Esophagus muscularis mucosa (tissue), 4 donors: ENCODE measurements at regions of chr1 and their contacts with region 1.

Region 1: GRCh38 chr1:172322219-172323061 is 98.0 kb upstream of the C1orf105 start:
- DNase-seq: no peak
- H3K4me3 ChIP-seq: peak overlapping the region; percentile 6 to 39 (median 26)
- H3K27ac ChIP-seq: peak overlapping the region; percentile 78 to 84 (median 80)
- H3K4me1 ChIP-seq: peaks cover 13 to 46% (median 45%) of the 10 kb centered on the region in 4 donors
- H3K27me3 ChIP-seq: no peaks in the 10 kb centered on the region
- CTCF ChIP-seq: no peak
- EP300 ChIP-seq: no peak
- POLR2A ChIP-seq: no peak

Region 2: GRCh38 chr1:172357753-172358385 is 35.4 kb after region 1 on chr1:
- intact Hi-C with region 1: loop called (anchors 5 kb)
- DNase-seq: no peak
- H3K4me3 ChIP-seq: peak overlapping the region; percentile 20 to 41 (median 32)
- H3K27ac ChIP-seq: peak overlapping the region; percentile 78 to 83 (median 80)
- H3K4me1 ChIP-seq: peaks cover 35 to 53% (median 51%) of the 10 kb centered on the region in 4 donors
- H3K27me3 ChIP-seq: no peaks in the 10 kb centered on the region
- CTCF ChIP-seq: no peak
- EP300 ChIP-seq: no peak
- POLR2A ChIP-seq: no peak